Natural killer cell (primary cell): ENCODE measurements at regions of chr6 and their contacts with region 1.

Region 1: DNA sequence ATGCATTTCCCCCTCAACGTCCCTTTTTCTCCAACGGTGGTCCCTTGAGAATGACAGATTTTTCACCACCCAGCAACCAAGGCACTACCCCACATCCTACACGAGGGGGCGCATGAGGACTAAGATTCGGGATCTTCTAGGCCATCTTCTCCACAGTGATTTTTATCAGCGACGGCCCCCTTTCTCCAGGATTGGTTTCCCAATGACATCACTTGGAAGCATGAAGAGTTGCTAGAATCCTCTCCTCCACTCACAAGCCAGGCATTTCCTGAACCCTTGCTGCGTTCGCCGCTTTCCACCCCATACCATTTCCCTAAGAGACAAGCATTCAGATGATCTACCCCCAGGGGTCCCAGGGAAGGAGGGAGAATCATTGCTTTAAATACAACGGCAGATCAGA is 252.0 kb downstream of the HIVEP2 start:
- DNase-seq: peak; percentile 55 to 84
- ATAC-seq: peak; percentile 82 to 94 (median 85)
- H3K4me3 ChIP-seq: no peak overlapping the region
- H3K4me3 Mint-ChIP-seq: no peak overlapping the region
- H3K27ac ChIP-seq: no peak overlapping the region
- H3K27ac Mint-ChIP-seq: no peak overlapping the region
- H3K4me1 ChIP-seq: no peaks in the 10 kb centered on the region
- H3K4me1 Mint-ChIP-seq: peaks cover 0 to 5% of the 10 kb centered on the region in 2 donors
- H3K27me3 ChIP-seq: no peaks in the 10 kb centered on the region
- H3K27me3 Mint-ChIP-seq: peaks cover 0 to 5% of the 10 kb centered on the region in 2 donors
- CTCF ChIP-seq: peak; percentile 95

Region 2: DNA sequence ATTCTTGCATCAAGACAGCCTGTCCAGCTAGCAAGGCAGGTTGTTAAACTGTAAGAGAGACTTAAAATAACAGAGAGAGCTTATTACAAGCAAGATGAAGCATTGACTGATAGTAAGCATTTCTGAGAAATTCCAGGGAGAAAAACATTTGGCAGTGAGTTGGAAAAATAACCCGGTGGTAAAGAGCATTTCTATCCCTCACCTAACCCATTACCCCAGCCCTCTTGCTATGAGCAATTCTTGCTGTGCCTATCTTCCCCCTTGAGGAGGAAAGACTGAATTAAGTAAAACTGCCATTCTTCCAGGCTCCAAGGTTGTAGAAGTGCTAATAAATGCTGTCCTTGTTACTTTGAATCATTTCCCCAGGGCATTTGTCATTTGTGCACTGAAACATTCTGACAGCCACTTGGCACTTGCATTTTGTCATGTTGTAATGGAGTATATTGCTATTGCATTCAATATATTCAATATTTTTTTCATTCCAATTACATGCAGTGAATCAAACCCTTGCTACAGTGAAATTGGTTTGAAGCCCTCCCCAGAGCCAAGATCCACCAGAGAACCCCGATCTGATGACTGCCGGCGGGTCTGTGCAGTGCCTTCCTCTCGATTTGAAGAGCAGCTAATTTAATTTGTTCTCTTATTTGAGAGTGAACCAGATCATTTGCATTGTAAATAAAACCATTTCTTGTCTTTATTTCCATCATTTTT is 39.1 kb before region 1 on chr6:
- intact Hi-C with region 1: no loop called
- DNase-seq: no peak
- ATAC-seq: no peak
- H3K4me3 ChIP-seq: no peak overlapping the region
- H3K4me3 Mint-ChIP-seq: no peak overlapping the region
- H3K27ac ChIP-seq: no peak overlapping the region
- H3K27ac Mint-ChIP-seq: no peak overlapping the region
- H3K4me1 ChIP-seq: no peaks in the 10 kb centered on the region
- H3K4me1 Mint-ChIP-seq: no peaks in the 10 kb centered on the region
- H3K27me3 ChIP-seq: no peaks in the 10 kb centered on the region
- H3K27me3 Mint-ChIP-seq: peaks cover 10 to 43% of the 10 kb centered on the region in 2 donors
- CTCF ChIP-seq: no peak

Region 3: GRCh38 chr6:142773859-142774648 is 81.1 kb after region 1 on chr6:
- intact Hi-C with region 1: no loop called
- DNase-seq: peak in 1 of 2 donors; percentile 56
- ATAC-seq: no peak
- H3K4me3 ChIP-seq: no peak overlapping the region
- H3K4me3 Mint-ChIP-seq: no peak overlapping the region
- H3K27ac ChIP-seq: no peak overlapping the region
- H3K27ac Mint-ChIP-seq: no peak overlapping the region
- H3K4me1 ChIP-seq: no peaks in the 10 kb centered on the region
- H3K4me1 Mint-ChIP-seq: no peaks in the 10 kb centered on the region
- H3K27me3 ChIP-seq: no peaks in the 10 kb centered on the region
- H3K27me3 Mint-ChIP-seq: no peaks in the 10 kb centered on the region
- CTCF ChIP-seq: no peak

Region 4: GRCh38 chr6:143026696-143027449 is 333.9 kb after region 1 on chr6:
- intact Hi-C with region 1: loop called (anchors 1 kb)
- DNase-seq: peak; percentile 31 to 74
- ATAC-seq: peak; percentile 61 to 73 (median 69)
- H3K4me3 ChIP-seq: no peak overlapping the region
- H3K4me3 Mint-ChIP-seq: no peak overlapping the region
- H3K27ac ChIP-seq: no peak overlapping the region
- H3K27ac Mint-ChIP-seq: no peak overlapping the region
- H3K4me1 ChIP-seq: no peaks in the 10 kb centered on the region
- H3K4me1 Mint-ChIP-seq: no peaks in the 10 kb centered on the region
- H3K27me3 ChIP-seq: no peaks in the 10 kb centered on the region
- H3K27me3 Mint-ChIP-seq: peaks cover 1 to 4% of the 10 kb centered on the region in 2 donors
- CTCF ChIP-seq: peak; percentile 70

Region 5: DNA sequence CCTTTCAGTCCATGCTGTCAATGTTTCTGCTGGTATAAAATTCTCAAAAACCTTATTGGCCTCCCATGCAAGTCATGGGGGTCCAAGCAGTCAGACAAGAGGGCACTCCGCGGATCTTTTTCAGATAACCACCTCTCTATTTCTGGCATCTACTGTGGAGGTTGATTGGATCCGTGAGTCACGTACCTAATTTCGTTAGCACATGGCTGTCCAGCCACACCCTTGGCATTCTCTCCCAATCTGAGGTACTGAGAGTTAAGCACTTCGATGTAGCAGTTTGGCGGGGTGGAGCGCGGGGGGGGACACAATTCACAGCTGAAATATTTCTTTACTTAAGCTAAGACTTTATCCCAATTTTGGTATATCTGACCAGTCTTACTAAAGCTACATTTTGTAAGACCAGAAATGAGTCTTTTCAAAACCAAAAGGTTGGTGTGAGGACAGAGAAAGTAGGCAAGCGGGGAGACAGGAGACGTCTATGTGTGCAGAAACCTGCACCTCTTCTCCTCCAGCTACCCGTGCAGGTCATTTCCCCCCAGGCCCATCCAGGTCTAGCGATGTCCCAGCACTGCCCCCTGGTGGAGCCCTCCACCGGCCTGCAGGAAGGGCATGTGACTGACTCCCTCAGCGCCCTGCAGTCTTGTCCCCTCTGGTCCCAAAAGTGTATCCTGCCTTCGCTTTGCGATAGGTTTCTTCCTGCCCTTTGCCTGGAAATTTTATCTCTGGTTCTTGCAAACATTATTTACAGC is 644.4 kb after region 1 on chr6:
- intact Hi-C with region 1: loop called (anchors 2 kb)
- DNase-seq: peak; percentile 21 to 60
- ATAC-seq: peak in 1 of 3 donors; percentile 62
- H3K4me3 ChIP-seq: no peak overlapping the region
- H3K4me3 Mint-ChIP-seq: no peak overlapping the region
- H3K27ac ChIP-seq: no peak overlapping the region
- H3K27ac Mint-ChIP-seq: no peak overlapping the region
- H3K4me1 ChIP-seq: no peaks in the 10 kb centered on the region
- H3K4me1 Mint-ChIP-seq: no peaks in the 10 kb centered on the region
- H3K27me3 ChIP-seq: no peaks in the 10 kb centered on the region
- H3K27me3 Mint-ChIP-seq: peaks cover 0 to 3% of the 10 kb centered on the region in 2 donors
- CTCF ChIP-seq: no peak

Region 6: GRCh38 chr6:144284783-144285547 is 1592.0 kb after region 1 on chr6 and contains the start of gene UTRN:
- intact Hi-C with region 1: no loop called
- DNase-seq: peak; percentile 46 to 55
- ATAC-seq: peak; percentile 54 to 72 (median 69)
- H3K4me3 ChIP-seq: peak within 1 kb of the TSS; percentile 62
- H3K4me3 Mint-ChIP-seq: peak within 1 kb of the TSS; percentile 100
- H3K27ac ChIP-seq: peak within 1 kb of the TSS; percentile 51
- H3K27ac Mint-ChIP-seq: peak within 1 kb of the TSS; percentile 91 to 92
- H3K4me1 ChIP-seq: peaks cover 13% of the 10 kb centered on the region
- H3K4me1 Mint-ChIP-seq: peaks cover 42 to 48% of the 10 kb centered on the region in 2 donors
- H3K27me3 ChIP-seq: no peaks in the 10 kb centered on the region
- H3K27me3 Mint-ChIP-seq: no peaks in the 10 kb centered on the region
- CTCF ChIP-seq: no peak
- total RNA-seq, gene UTRN: 584 to 715 (median 591) TPM